Dorsolateral prefrontal cortex (tissue), 120 donors: ENCODE measurements at regions of chr19 and their contacts with region 1.

Region 1: DNA sequence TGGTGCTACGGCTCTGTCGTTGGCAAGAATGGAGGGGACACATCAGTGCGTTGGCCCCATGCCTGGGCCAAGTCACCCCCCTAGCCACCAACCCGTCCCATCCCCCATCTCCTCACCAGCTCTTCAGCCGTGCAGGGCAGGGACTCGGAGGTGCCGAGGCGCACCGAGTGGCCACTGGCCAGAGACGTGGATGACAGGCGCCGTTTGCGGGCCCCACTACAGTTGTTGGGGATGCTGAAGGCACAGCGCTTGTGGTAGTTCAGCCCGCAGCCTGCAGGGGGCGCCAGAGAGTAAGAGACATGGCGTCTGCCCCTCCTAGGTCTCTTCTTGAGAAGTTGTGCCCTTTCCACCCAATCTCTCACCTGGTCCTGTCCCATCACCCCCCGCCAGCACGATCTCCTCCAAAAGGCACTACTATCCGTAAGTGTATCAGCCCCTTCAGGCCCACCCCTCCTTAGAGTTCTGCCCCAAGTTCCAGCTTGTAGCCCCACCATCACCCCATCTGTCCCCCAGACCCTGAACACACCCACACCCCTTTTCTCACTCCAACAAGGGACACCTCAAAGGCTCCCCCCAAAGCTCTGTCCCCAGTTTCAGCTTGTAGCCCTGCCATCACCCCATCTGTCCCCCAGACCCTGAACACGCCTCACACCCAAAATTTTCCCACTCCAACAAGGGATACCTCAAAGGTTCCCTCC is 12.4 kb downstream of the PRKD2 start:
- DNase-seq: peak in 7 of 10 donors; percentile 29 to 69 (median 62)
- H3K4me3 ChIP-seq: no peak overlapping the region
- H3K27ac ChIP-seq: no peak overlapping the region
- H3K27me3 ChIP-seq: no peaks in the 10 kb centered on the region
- CTCF ChIP-seq: peak; percentile 58 to 96 (median 87)

Region 2: DNA sequence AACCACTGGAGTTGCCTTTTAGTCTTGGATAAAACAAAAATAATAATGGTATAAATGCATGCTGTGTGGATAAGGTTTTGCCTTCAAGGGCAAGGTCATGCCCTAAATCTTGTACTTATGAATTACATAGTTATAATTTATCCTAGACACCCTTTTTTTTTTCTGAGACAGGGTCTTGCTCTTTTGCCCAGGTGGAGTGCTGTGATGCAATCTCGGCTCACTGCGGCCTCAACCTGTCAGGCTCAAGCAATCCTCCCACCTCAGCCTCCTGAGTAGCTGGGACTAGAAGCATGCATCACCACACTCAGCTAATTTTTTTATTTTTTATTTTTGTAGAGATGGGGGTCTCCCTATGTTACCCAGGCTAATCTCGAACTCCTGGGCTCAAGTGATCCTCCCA is 35.9 kb before region 1 on chr19:
- intact Hi-C with region 1: loop called in 1 of 2 experiments (anchors 5 kb)
- DNase-seq: no peak
- H3K4me3 ChIP-seq: no peak overlapping the region
- H3K27ac ChIP-seq: no peak overlapping the region
- H3K27me3 ChIP-seq: no peaks in the 10 kb centered on the region
- CTCF ChIP-seq: no peak

Region 3: GRCh38 chr19:46840136-46840942 is 135.8 kb after region 1 on chr19:
- intact Hi-C with region 1: loop called in 1 of 2 experiments (anchors 5 kb)
- DNase-seq: peak in 3 of 10 donors; percentile 28 to 58 (median 42)
- H3K4me3 ChIP-seq: peak overlapping the region in 1 of 59 donors; percentile 12
- H3K27ac ChIP-seq: peak overlapping the region in 42 of 59 donors; percentile 1 to 79 (median 57)
- H3K27me3 ChIP-seq: no peaks in the 10 kb centered on the region
- CTCF ChIP-seq: peak; percentile 70 to 90 (median 80)